Activated CD4-positive, alpha-beta memory T cell treated with anti-CD3 and anti-CD28 coated beads, Interleukin-2, amount 10 ng/mL, durations not matched to agents 7 days and 5 days (primary cell): ENCODE measurements at regions of chr19 and their contacts with region 1.

Region 1: GRCh38 chr19:42268704-42269477 is at the start of gene CIC:
- DNase-seq: peak; percentile 99
- H3K4me3 Mint-ChIP-seq: no peak within 1 kb of the TSS
- H3K27ac Mint-ChIP-seq: peak within 1 kb of the TSS; percentile 99
- H3K4me1 Mint-ChIP-seq: peaks cover 32% of the 10 kb centered on the region
- H3K27me3 Mint-ChIP-seq: no peaks in the 10 kb centered on the region
- total RNA-seq, gene CIC: 86.5 to 88.8 TPM

Region 2: GRCh38 chr19:42254989-42255765 is 13.7 kb before region 1 on chr19 and contains the start of gene ERF:
- CTCF ChIA-PET with region 1: interaction called, 3 read pairs
- POLR2A ChIA-PET with region 1: interaction called, 22 read pairs
- DNase-seq: peak; percentile 93
- H3K4me3 Mint-ChIP-seq: peak within 1 kb of the TSS; percentile 72
- H3K27ac Mint-ChIP-seq: peak within 1 kb of the TSS; percentile 79
- H3K4me1 Mint-ChIP-seq: peaks cover 33% of the 10 kb centered on the region
- H3K27me3 Mint-ChIP-seq: peaks cover 11% of the 10 kb centered on the region
- total RNA-seq, gene ERF: 46.9 to 52.6 TPM

Region 3: DNA sequence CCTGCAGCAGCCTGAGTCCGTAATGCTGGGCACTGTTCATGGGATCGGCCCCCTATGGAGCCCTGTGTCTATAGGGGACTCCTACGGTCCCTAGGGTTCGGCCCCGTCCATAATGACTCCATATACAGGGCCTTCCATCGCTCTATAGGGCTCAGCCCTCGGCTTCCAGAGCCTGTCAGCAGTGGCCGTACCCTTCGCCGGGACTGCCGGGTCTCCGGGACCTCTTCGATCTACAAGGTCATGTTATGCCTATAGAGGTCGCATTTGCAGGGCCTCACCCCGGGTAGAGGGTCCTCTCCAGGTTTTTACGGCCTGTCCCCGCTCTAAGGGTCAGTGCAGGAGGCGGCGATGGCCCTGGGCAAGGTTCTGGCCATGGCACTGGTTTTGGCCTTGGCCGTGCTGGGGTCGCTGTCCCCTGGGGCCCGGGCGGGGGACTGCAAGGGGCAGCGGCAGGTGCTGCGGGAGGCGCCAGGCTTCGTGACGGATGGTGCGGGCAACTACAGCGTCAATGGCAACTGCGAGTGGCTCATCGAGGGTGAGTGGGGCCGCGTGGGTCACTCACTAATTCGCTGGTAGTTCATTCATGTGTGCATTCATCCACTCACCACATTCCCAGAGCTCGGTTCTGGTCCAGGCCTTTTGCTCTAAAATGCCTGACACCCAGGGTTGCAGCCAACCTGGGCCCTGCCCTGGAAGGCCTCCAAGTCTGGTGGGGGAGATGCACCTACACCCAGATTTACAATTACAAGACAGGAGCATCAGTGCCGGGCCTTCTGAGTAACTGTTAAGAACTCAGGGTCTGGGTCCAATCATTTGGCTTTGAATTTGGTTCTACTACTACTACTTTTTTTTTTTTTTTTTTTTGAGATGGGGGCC is 57.2 kb after region 1 on chr19:
- CTCF ChIA-PET with region 1: no interaction called
- POLR2A ChIA-PET with region 1: no interaction called
- DNase-seq: no peak
- H3K4me3 Mint-ChIP-seq: peak overlapping the region; percentile 86
- H3K27ac Mint-ChIP-seq: peak overlapping the region; percentile 76
- H3K4me1 Mint-ChIP-seq: peaks cover 18% of the 10 kb centered on the region
- H3K27me3 Mint-ChIP-seq: peaks cover 22% of the 10 kb centered on the region

Region 4: GRCh38 chr19:42396381-42397262 is 127.7 kb after region 1 on chr19:
- CTCF ChIA-PET with region 1: no interaction called
- POLR2A ChIA-PET with region 1: no interaction called
- DNase-seq: peak; percentile 98
- H3K4me3 Mint-ChIP-seq: peak overlapping the region; percentile 92
- H3K27ac Mint-ChIP-seq: peak overlapping the region; percentile 76
- H3K4me1 Mint-ChIP-seq: peaks cover 36% of the 10 kb centered on the region
- H3K27me3 Mint-ChIP-seq: peaks cover 8% of the 10 kb centered on the region